ENCODE measurements at regions of chr10 and their contacts with region 1.

Region 1: DNA sequence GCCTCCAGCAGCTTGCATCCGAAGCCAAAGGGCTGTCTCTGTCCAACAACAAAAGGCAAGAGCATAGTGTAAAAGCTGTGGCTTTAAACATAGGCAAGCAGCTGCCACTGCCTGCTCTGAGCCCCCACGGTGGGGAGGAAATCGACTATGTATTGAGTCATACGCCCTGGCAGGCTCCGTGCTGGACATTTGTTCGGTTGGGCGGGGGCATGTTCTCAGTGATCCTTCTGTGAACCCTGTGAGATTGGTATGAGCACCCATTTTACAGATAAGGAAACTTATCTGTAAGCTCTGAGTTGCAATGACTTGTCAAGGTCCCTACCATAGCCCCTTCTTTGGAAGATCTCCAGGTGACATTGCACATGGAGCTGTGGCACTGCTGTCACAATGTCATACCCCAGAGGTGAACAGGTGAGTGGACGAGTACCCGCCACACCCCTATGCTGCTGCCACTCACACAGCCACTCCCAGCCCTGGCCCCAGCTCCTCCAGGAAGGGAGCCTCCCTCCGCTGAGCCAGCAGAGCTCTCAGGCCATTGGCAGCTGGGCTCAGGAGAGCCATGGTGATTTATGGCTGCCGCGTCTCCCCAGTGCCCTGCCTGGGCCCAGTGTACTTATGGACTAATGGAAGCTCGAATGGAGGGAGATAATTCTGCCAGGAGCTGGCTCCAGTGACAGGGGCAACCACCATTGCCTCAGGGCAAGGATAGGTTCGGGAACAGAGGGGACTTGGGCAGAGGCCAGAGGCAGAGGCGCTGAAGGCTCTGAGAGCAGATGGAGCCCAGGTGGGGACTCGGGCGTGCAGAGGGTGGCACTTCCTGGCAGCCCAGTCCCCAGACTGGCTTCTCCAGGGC is 43.7 kb downstream of the UNC5B start:
- DNase-seq: peak; percentile 74
- H3K4me3 ChIP-seq: no peak overlapping the region
- H3K27ac ChIP-seq: peak overlapping the region; percentile 53 to 100
- H3K4me1 ChIP-seq: peaks cover 56 to 97% of the 10 kb centered on the region in 2 experiments
- H3K27me3 ChIP-seq: no peaks in the 10 kb centered on the region
- CTCF ChIP-seq: no peak
- EP300 ChIP-seq: peak in 1 of 2 experiments; percentile 81; a peak in 3 of 4 replicates
- RAD21 ChIP-seq: 0 out of 2 replicates have a peak, but pooled peaks have one; percentile 20

Region 2: GRCh38 chr10:71278691-71279588 is 22.9 kb after region 1 on chr10:
- CTCF ChIA-PET with region 1: interaction called, 139 read pairs
- POLR2A ChIA-PET with region 1: interaction called, 13 read pairs
- DNase-seq: peak; percentile 90
- H3K4me3 ChIP-seq: no peak overlapping the region; a peak in 1 of 4 replicates
- H3K27ac ChIP-seq: peak overlapping the region in 1 of 2 experiments; percentile 99; a peak in 2 of 4 replicates
- H3K4me1 ChIP-seq: peaks cover 0 to 67% of the 10 kb centered on the region in 2 experiments; a peak in 3 of 4 replicates
- H3K27me3 ChIP-seq: no peaks in the 10 kb centered on the region
- CTCF ChIP-seq: no peak
- EP300 ChIP-seq: peak in 1 of 2 experiments; percentile 91; a peak in 2 of 4 replicates
- RAD21 ChIP-seq: peak; percentile 23; the same call in 1 of the 2 replicates

Region 3: GRCh38 chr10:71661060-71661622 is 405.1 kb after region 1 on chr10:
- CTCF ChIA-PET with region 1: no interaction called
- POLR2A ChIA-PET with region 1: no interaction called
- DNase-seq: no peak
- H3K4me3 ChIP-seq: no peak overlapping the region
- H3K27ac ChIP-seq: no peak overlapping the region
- H3K4me1 ChIP-seq: peaks cover 0 to 16% of the 10 kb centered on the region in 2 experiments; a peak in 1 of 4 replicates
- H3K27me3 ChIP-seq: peaks cover 23% of the 10 kb centered on the region; the same call in 1 of the 2 replicates
- CTCF ChIP-seq: no peak
- EP300 ChIP-seq: no peak
- RAD21 ChIP-seq: no peak